ENCODE measurements at regions of chr7 and their contacts with region 1.

Region 1: GRCh38 chr7:151448261-151449252 is 8.6 kb upstream of the CRYGN start:
- DNase-seq: peak; percentile 80
- H3K4me3 Mint-ChIP-seq: peak overlapping the region; percentile 66
- H3K27ac Mint-ChIP-seq: no peak overlapping the region
- H3K4me1 Mint-ChIP-seq: peaks cover 11% of the 10 kb centered on the region
- H3K27me3 Mint-ChIP-seq: peaks cover 18% of the 10 kb centered on the region

Region 2: DNA sequence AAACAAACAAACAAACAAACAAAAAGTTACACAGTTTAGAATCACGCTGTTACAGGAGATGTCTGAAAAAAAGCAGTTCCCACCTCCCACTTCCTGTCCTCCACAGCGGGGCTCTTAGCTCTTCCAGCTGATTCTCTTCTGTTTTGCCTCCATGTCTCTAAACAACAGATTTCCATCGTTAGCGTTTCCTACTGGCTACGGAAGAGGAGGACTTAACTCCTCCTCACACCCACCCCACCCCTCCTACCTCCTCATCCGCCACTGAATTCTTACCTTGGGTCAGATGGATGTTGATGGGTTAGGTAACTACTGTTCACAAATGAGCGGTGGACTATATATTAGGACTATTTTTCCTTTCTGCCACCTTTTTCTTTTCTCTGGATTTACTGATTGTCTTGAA is 143.7 kb before region 1 on chr7:
- CTCF ChIA-PET with region 1: interaction called, 10 read pairs
- POLR2A ChIA-PET with region 1: no interaction called
- DNase-seq: no peak
- H3K4me3 Mint-ChIP-seq: no peak overlapping the region
- H3K27ac Mint-ChIP-seq: no peak overlapping the region
- H3K4me1 Mint-ChIP-seq: peaks cover 13% of the 10 kb centered on the region
- H3K27me3 Mint-ChIP-seq: peaks cover 18% of the 10 kb centered on the region

Region 3: DNA sequence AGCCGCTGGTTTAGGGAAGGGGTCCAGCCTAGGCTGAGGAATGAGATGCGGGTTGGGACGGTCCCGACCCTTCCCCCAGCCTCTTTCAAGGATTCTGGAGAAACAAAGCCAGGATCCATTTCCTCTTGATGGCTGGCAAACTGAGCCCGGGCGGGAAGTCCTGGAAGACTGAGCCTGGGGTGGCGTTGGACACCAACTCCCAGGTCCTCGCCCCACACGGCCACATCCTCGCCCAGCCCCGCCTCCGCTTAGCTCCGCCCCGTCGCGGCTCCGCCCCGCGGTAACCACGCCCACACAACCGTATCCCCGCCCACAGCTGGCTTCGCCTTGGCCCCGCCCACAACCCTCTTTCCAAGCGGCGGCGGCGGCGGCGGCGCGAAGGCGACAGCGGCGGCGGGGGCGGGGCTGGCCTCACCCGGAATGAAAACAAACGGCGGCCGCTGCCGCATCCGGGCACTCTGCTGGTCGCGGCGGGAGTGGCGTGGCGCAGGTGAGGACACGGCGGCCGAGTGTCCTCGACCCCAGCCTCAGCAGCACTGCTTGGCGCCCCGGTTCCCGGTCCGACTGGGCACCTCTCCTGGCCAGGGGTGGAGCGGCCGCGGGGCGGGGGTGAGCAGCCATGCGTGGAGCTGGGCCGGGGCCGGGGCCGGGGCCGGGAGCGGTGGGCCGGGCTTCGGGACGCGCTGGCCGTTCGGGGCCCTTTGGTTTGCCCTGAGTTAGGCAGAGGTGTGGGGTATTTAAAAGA is 107.0 kb before region 1 on chr7 and contains the start of gene NUB1:
- CTCF ChIA-PET with region 1: interaction called, 11 read pairs
- POLR2A ChIA-PET with region 1: no interaction called
- DNase-seq: peak; percentile 95
- H3K4me3 Mint-ChIP-seq: peak within 1 kb of the TSS; percentile 78
- H3K27ac Mint-ChIP-seq: peak within 1 kb of the TSS; percentile 76
- H3K4me1 Mint-ChIP-seq: peaks cover 31% of the 10 kb centered on the region
- H3K27me3 Mint-ChIP-seq: no peaks in the 10 kb centered on the region
- total RNA-seq, gene NUB1: 62.1 to 67.3 TPM

Region 4: DNA sequence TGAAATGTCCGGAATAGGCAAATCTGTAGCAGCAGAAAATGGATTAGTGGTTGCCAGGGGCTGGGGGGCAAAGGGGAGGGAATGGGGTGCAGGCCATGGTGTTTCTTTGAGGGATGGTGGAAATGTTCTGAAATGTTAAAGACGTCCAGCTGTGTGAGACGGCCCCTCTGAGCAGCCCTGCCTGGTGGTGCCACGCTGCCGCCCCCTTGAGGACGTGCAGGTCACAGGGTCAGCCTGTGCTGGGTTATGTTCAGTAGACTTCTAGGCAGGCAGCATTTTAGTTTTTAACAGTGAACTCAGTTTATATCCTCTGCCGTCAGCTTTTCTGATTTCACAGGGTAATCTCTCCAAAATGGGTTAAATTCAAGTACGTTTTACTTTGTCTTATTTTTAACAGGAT is 97.5 kb before region 1 on chr7:
- CTCF ChIA-PET with region 1: interaction called, 38 read pairs
- POLR2A ChIA-PET with region 1: interaction called, 8 read pairs
- DNase-seq: peak; percentile 57
- H3K4me3 Mint-ChIP-seq: peak overlapping the region; percentile 69
- H3K27ac Mint-ChIP-seq: peak overlapping the region; percentile 95
- H3K4me1 Mint-ChIP-seq: peaks cover 57% of the 10 kb centered on the region
- H3K27me3 Mint-ChIP-seq: no peaks in the 10 kb centered on the region

Region 5: GRCh38 chr7:151368136-151368571 is 80.4 kb before region 1 on chr7:
- CTCF ChIA-PET with region 1: interaction called, 184 read pairs
- POLR2A ChIA-PET with region 1: interaction called, 13 read pairs
- DNase-seq: peak; percentile 77
- H3K4me3 Mint-ChIP-seq: no peak overlapping the region
- H3K27ac Mint-ChIP-seq: no peak overlapping the region
- H3K4me1 Mint-ChIP-seq: peaks cover 11% of the 10 kb centered on the region
- H3K27me3 Mint-ChIP-seq: no peaks in the 10 kb centered on the region

Region 6: GRCh38 chr7:151432791-151433521 is 15.6 kb before region 1 on chr7:
- CTCF ChIA-PET with region 1: interaction called, 24 read pairs
- POLR2A ChIA-PET with region 1: interaction called, 3 read pairs
- DNase-seq: peak; percentile 71
- H3K4me3 Mint-ChIP-seq: no peak overlapping the region
- H3K27ac Mint-ChIP-seq: peak overlapping the region; percentile 70
- H3K4me1 Mint-ChIP-seq: peaks cover 38% of the 10 kb centered on the region
- H3K27me3 Mint-ChIP-seq: no peaks in the 10 kb centered on the region

Region 7: GRCh38 chr7:151623766-151624165 is 175.2 kb after region 1 on chr7:
- CTCF ChIA-PET with region 1: no interaction called
- POLR2A ChIA-PET with region 1: no interaction called
- DNase-seq: no peak
- H3K4me3 Mint-ChIP-seq: no peak overlapping the region
- H3K27ac Mint-ChIP-seq: no peak overlapping the region
- H3K4me1 Mint-ChIP-seq: peaks cover 16% of the 10 kb centered on the region
- H3K27me3 Mint-ChIP-seq: no peaks in the 10 kb centered on the region